ENCODE measurements at regions of chr18 and their contacts with region 1.

Region 1: GRCh38 chr18:32450026-32450691 is 20.5 kb downstream of the GAREM1 start:
- DNase-seq: no peak
- H3K4me3 ChIP-seq: no peak overlapping the region
- H3K27ac ChIP-seq: no peak overlapping the region
- H3K4me1 ChIP-seq: peaks cover 3% of the 10 kb centered on the region
- H3K27me3 ChIP-seq: no peaks in the 10 kb centered on the region
- CTCF ChIP-seq: no peak

Region 2: DNA sequence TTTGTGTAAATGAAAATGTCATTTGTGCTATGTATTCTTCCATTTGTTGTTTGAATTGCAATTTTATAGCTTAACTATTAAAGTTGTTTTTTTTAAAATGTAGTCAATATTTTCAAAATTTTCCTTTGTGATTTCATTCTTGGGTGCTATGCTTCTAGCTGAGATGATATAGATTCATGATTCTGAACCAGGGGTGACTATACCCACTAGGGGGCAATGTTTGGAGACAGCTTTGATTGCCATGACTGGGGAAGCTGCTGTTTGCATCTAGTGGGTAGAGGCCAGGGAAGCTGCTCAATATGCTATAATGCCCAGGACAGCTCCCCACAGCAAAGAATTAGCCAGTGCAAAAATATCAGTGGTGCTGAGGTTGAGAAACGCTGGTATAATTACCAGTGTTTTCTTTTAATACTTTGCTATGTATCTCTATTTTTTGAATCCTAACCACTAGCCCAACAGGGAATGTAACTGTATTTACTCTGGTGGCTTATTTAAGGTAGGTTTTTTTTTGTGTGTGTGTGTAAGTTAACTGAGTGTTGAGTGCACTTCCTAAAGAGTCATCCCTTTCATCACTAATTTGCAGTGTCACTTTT is 160.6 kb before region 1 on chr18:
- CTCF ChIA-PET with region 1: interaction called, 17 read pairs
- dilution Hi-C with region 1: no loop called
- in situ Hi-C with region 1: no loop called
- intact Hi-C with region 1: no loop called
- DNase-seq: peak; percentile 53
- H3K4me3 ChIP-seq: no peak overlapping the region
- H3K27ac ChIP-seq: no peak overlapping the region
- H3K4me1 ChIP-seq: peaks cover 6% of the 10 kb centered on the region
- H3K27me3 ChIP-seq: no peaks in the 10 kb centered on the region
- CTCF ChIP-seq: peak; percentile 65 to 83

Region 3: DNA sequence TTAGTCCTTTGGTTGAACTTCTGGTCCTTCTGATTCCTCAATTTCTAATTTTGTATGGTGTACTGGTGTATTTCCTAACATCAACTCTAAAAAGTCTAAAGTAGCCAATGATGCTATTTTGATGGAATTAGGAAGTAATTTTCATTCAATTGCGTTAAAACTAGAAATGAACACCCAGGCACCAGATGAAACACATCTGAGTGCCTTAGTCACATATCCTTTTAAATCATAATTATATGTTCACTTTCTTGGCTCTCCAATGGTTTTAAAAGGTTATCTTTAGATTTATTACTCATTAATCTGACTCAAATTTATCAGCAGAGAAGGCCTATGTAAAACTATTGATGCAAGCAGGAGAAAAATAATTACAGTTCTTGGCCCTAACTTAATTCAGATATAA is 99.1 kb before region 1 on chr18:
- CTCF ChIA-PET with region 1: no interaction called
- dilution Hi-C with region 1: no loop called
- in situ Hi-C with region 1: no loop called
- intact Hi-C with region 1: no loop called
- DNase-seq: no peak
- H3K4me3 ChIP-seq: no peak overlapping the region
- H3K27ac ChIP-seq: no peak overlapping the region
- H3K4me1 ChIP-seq: peaks cover 9% of the 10 kb centered on the region
- H3K27me3 ChIP-seq: no peaks in the 10 kb centered on the region
- CTCF ChIP-seq: no peak

Measured in mammary epithelial cell (primary cell).